Activated CD4-positive, alpha-beta T cell treated with anti-CD3 and anti-CD28 coated beads, Interleukin-2, amount 10 ng/mL, durations not matched to agents 24 days and 14 days (primary cell): ENCODE measurements at regions of chr14 and their contacts with region 1.

Region 1: DNA sequence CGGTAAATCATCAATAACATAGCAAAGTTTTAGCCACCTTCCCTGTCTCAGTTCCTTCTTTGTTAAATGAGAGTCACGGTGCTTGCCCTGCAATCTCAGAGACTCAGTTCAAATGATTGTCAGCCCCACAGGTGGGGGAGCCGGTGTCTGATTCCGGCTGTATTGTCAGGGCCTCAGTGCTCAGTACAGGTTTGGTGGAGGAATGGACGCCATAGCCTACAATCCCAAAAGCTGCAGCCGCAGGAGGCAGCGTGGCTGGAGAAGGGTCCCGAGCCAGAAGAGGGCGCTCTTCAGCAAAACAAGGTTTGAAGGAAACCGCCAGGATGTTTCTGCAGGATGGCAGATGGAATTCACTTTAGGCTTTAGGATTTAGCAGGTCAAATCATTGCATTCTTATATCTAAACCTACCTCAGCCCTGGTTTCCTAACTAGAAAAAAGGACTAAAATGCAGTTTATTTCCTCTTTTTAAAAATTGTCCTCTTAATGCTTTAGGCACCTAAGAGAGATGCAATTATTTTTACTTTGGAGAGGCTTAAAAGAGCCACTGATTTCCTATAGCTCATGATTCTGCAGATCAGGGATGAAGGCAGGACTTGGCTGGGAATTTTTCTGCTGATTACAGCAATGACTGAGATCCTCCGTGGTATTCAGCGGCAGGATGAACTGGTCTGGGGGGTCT is 29.2 kb downstream of the FOS start:
- DNase-seq: peak; percentile 92
- H3K4me3 Mint-ChIP-seq: no peak overlapping the region
- H3K27ac Mint-ChIP-seq: no peak overlapping the region
- H3K4me1 Mint-ChIP-seq: peaks cover 16% of the 10 kb centered on the region
- H3K27me3 Mint-ChIP-seq: no peaks in the 10 kb centered on the region

Region 2: GRCh38 chr14:74945823-74946682 is 361.8 kb before region 1 on chr14:
- intact Hi-C with region 1: loop called (anchors 10 kb)
- DNase-seq: peak; percentile 94
- H3K4me3 Mint-ChIP-seq: no peak overlapping the region
- H3K27ac Mint-ChIP-seq: no peak overlapping the region
- H3K4me1 Mint-ChIP-seq: peaks cover 21% of the 10 kb centered on the region
- H3K27me3 Mint-ChIP-seq: peaks cover 2% of the 10 kb centered on the region

Region 3: DNA sequence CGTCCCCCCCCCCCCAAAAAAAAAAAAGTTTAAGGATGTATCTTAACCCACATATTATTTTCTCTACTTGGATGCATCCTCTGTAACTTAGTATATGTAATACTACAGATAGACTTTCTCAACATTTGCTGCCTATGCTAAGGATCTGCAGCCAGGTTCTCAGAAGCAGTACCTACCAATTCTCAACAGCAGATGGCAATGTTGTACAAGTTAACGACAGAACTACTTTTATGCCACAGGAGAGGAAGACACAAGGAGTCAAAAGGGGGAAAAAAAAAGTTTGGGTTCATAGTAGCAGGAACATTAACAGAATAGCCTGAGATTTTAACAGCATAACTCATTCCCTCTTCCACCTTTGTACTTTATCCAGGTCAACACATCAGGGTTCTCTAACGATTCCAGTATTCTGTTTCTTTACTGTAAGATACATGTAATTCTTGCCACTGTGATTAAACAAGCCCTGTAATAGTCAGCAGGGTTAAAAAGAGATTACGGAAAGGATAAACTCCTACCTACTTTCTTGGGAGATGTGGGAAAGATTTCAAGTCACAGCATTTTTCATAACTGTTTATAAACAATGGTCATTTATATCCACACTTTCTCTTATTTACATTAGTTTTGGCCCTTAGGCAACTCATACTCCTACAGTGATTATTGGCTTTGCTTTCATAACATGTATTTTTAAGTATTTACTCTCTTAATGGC is 175.3 kb before region 1 on chr14:
- intact Hi-C with region 1: loop called (anchors 1 kb)
- DNase-seq: peak; percentile 91
- H3K4me3 Mint-ChIP-seq: no peak overlapping the region
- H3K27ac Mint-ChIP-seq: no peak overlapping the region
- H3K4me1 Mint-ChIP-seq: peaks cover 13% of the 10 kb centered on the region
- H3K27me3 Mint-ChIP-seq: no peaks in the 10 kb centered on the region

Region 4: GRCh38 chr14:75249251-75249957 is 58.4 kb before region 1 on chr14:
- intact Hi-C with region 1: loop called (anchors 2 kb)
- DNase-seq: peak; percentile 96
- H3K4me3 Mint-ChIP-seq: peak overlapping the region; percentile 66
- H3K27ac Mint-ChIP-seq: peak overlapping the region; percentile 88
- H3K4me1 Mint-ChIP-seq: peaks cover 49% of the 10 kb centered on the region
- H3K27me3 Mint-ChIP-seq: peaks cover 34% of the 10 kb centered on the region

Region 5: GRCh38 chr14:75487155-75487671 is 179.4 kb after region 1 on chr14:
- intact Hi-C with region 1: loop called (anchors 1 kb)
- DNase-seq: peak; percentile 75
- H3K4me3 Mint-ChIP-seq: peak overlapping the region; percentile 22
- H3K27ac Mint-ChIP-seq: peak overlapping the region; percentile 65
- H3K4me1 Mint-ChIP-seq: peaks cover 27% of the 10 kb centered on the region
- H3K27me3 Mint-ChIP-seq: peaks cover 2% of the 10 kb centered on the region

Region 6: GRCh38 chr14:75654127-75654732 is 346.4 kb after region 1 on chr14:
- intact Hi-C with region 1: loop called (anchors 1 kb)
- DNase-seq: peak; percentile 95
- H3K4me3 Mint-ChIP-seq: no peak overlapping the region
- H3K27ac Mint-ChIP-seq: no peak overlapping the region
- H3K4me1 Mint-ChIP-seq: peaks cover 6% of the 10 kb centered on the region
- H3K27me3 Mint-ChIP-seq: no peaks in the 10 kb centered on the region